Lower leg skin (tissue), 4 donors: ENCODE measurements at regions of chr11 and their contacts with region 1.

Region 1: GRCh38 chr11:61572913-61573312 is 8.0 kb downstream of the SYT7 start:
- DNase-seq: no peak
- H3K4me3 ChIP-seq: no peak overlapping the region
- CTCF ChIP-seq: no peak
- POLR2A ChIP-seq: no peak

Region 2: GRCh38 chr11:61332797-61333549 is 239.9 kb before region 1 on chr11 and contains the starts of genes DDB1 and TKFC:
- intact Hi-C with region 1: no loop called
- DNase-seq: peak; percentile 91 to 99
- H3K4me3 ChIP-seq: peak within 1 kb of the TSS; percentile 97
- CTCF ChIP-seq: peak in 1 of 3 donors; percentile 34
- POLR2A ChIP-seq: peak in 1 of 2 donors; percentile 21
- total RNA-seq, gene DDB1: 166 to 204 (median 185) TPM
- total RNA-seq, gene TKFC: 26.6 to 37.3 (median 33.1) TPM

Region 3: GRCh38 chr11:61551630-61552029 is 21.3 kb before region 1 on chr11:
- intact Hi-C with region 1: loop called (anchors 1 kb)
- DNase-seq: no peak
- H3K4me3 ChIP-seq: no peak overlapping the region
- CTCF ChIP-seq: no peak
- POLR2A ChIP-seq: no peak

Region 4: DNA sequence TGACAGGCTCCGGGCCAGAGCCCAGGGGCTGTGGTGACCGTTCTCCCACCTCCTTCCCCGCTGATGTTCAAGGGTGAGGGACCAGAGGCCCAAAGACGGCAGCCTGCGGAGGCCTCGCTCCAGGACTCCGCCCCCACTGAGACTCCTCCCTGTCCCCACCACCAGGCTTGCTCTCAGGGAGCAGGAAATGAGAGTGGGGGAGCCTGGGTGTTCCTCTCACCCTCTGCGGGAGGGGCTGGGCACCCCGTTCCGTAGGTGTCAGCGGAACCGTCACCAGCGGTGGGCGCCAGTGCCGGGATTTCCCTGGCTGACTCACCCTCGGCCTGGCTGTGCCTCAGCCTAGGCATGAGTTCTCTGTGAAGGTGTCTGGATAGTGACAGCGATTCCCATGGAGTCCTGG is 123.0 kb after region 1 on chr11:
- intact Hi-C with region 1: no loop called
- DNase-seq: peak; percentile 78 to 97
- H3K4me3 ChIP-seq: no peak overlapping the region
- CTCF ChIP-seq: no peak
- POLR2A ChIP-seq: no peak